ENCODE measurements at regions of chr19 and their contacts with region 1.

Region 1: DNA sequence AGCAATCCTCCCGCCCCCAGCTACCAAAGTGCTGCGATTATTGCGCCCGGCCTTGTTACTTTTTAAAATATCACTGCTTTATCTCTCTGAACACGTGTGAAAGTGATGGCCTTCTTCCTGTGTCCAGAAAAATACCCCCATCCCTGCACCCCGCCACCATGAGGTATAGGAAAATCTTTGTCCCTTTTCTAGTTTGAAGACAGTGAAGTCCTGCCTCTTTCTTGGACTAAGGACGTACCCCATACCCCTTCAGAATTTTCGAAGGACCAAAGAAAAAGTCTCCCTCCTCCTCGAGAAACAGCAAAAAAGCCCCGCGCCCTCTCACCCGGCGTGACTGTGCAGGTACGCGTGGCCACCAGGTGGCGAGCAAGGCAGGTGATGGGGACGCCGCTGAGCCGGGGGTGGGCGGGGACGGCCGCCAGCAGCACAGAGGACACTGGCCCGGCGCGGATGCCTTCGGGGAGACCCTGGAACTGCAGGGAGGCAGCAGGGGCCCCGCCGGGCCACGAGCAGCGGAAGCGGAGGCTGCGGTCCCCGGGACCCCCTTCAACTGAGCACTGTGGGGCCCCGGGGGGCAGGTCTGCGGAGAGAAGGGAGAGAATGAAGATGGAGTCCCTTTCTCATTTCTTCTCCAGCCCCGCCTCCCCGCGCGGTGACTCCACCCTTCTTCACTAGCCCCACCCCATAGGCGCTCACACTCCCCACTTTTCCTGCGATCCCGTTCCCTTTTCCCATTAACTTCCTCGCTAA is 3.2 kb downstream of the VSIG10L start:
- DNase-seq: peak; percentile 56
- ATAC-seq: peak; percentile 76
- H3K4me3 ChIP-seq: peak overlapping the region; percentile 54 to 67
- H3K27ac ChIP-seq: peak overlapping the region; percentile 55
- H3K4me1 ChIP-seq: peaks cover 5 to 45% of the 10 kb centered on the region in 2 experiments; a peak in 3 of 4 replicates
- H3K27me3 ChIP-seq: no peaks in the 10 kb centered on the region
- CTCF ChIP-seq: peak; percentile 86 to 92 (median 89)
- POLR2A ChIP-seq: no peak
- RAD21 ChIP-seq: peak; percentile 86

Region 2: DNA sequence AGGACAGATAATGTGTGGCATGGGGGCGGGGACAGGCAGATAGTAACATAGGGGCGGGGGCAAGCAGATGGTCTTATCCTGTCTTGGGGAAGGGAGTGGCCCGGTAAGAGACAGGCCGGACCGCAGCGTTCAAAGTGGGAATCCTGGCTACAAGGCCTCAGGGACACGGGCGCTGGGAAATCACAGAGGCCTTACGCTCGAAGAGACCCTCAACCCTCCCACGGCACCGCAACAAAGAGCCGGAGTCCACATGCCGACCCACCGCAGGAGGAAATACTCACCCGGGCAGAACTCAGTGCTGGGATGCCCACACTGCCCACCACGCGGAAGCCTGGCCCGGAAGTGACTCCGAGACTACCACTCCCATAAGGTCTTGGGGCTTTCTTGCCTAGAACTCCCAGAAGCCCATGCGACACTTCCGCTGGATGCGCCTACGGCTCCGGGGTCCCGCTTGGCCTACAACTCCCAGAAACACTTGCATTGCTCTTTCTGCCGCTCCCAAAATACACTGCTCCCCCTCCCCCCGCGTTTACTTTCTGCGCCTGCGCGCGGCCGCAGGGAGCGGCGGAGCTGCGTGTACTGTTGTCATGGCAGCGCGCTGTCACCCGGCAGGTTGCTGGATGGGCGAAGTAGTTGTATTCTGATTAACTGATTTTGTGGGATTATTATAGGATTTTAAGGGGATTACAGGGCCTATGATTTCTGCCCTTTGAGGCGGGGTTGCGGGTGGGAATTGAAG is 230.5 kb before region 1 on chr19 and contains the start of gene CTU1:
- CTCF ChIA-PET with region 1: no interaction called
- POLR2A ChIA-PET with region 1: no interaction called
- RAD21 ChIA-PET with region 1: no interaction called
- intact Hi-C with region 1: no loop called
- DNase-seq: peak; percentile 99
- ATAC-seq: peak; percentile 93
- H3K4me3 ChIP-seq: peak within 1 kb of the TSS; percentile 93 to 95
- H3K27ac ChIP-seq: peak within 1 kb of the TSS; percentile 44
- H3K4me1 ChIP-seq: peaks cover 19 to 37% of the 10 kb centered on the region in 2 experiments
- H3K27me3 ChIP-seq: no peaks in the 10 kb centered on the region; the same call in 1 of the 2 replicates
- CTCF ChIP-seq: no peak
- POLR2A ChIP-seq: peak; percentile 60
- RAD21 ChIP-seq: no peak
- total RNA-seq, gene CTU1: 14.0 TPM

Region 3: GRCh38 chr19:51305479-51305878 is 33.3 kb before region 1 on chr19:
- CTCF ChIA-PET with region 1: no interaction called
- POLR2A ChIA-PET with region 1: no interaction called
- RAD21 ChIA-PET with region 1: no interaction called
- intact Hi-C with region 1: no loop called
- DNase-seq: no peak
- ATAC-seq: no peak
- H3K4me3 ChIP-seq: no peak overlapping the region
- H3K27ac ChIP-seq: no peak overlapping the region
- H3K4me1 ChIP-seq: no peaks in the 10 kb centered on the region
- H3K27me3 ChIP-seq: 0 out of 2 replicates have a peak, but pooled peaks cover 6% of the 10 kb centered on the region
- CTCF ChIP-seq: no peak
- POLR2A ChIP-seq: no peak
- RAD21 ChIP-seq: no peak

Region 4: GRCh38 chr19:51325161-51325976 is 13.4 kb before region 1 on chr19:
- CTCF ChIA-PET with region 1: interaction called, 10 read pairs
- POLR2A ChIA-PET with region 1: no interaction called
- RAD21 ChIA-PET with region 1: no interaction called
- intact Hi-C with region 1: no loop called
- DNase-seq: no peak
- ATAC-seq: no peak
- H3K4me3 ChIP-seq: no peak overlapping the region
- H3K27ac ChIP-seq: no peak overlapping the region
- H3K4me1 ChIP-seq: peaks cover 2 to 10% of the 10 kb centered on the region in 2 experiments; a peak in 2 of 4 replicates
- H3K27me3 ChIP-seq: peaks cover 8% of the 10 kb centered on the region; the same call in 1 of the 2 replicates
- CTCF ChIP-seq: no peak
- POLR2A ChIP-seq: no peak
- RAD21 ChIP-seq: no peak

Region 5: DNA sequence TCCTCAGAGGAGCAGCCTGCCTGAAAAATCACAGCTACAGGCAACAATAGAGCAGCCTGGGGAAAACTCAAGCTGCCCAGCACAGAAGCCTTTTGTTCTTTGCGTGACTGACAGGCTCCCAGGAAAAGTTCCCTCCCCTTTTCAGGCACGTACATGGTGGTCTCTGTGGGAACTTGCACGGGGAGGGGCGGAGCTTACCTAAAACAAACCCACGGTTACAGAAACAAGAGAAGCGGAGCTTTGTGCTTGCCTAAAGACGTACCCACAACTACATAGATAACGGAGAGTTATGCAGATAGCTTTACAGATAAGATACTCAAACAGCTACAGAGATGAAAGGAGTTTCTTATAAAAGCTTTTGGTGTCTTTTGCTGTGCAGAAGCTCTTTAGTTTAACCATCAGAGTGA is 16.0 kb after region 1 on chr19:
- CTCF ChIA-PET with region 1: interaction called, 11 read pairs
- POLR2A ChIA-PET with region 1: interaction called, 5 read pairs
- RAD21 ChIA-PET with region 1: no interaction called
- intact Hi-C with region 1: no loop called
- DNase-seq: no peak
- ATAC-seq: no peak
- H3K4me3 ChIP-seq: no peak overlapping the region
- H3K27ac ChIP-seq: no peak overlapping the region
- H3K4me1 ChIP-seq: peaks cover 15 to 32% of the 10 kb centered on the region in 2 experiments
- H3K27me3 ChIP-seq: no peaks in the 10 kb centered on the region
- CTCF ChIP-seq: no peak
- POLR2A ChIP-seq: no peak
- RAD21 ChIP-seq: no peak

Region 6: GRCh38 chr19:51367565-51368365 is 29.0 kb after region 1 on chr19:
- CTCF ChIA-PET with region 1: interaction called, 12 read pairs
- POLR2A ChIA-PET with region 1: interaction called, 12 read pairs
- RAD21 ChIA-PET with region 1: interaction called in 1 of 2 experiments, 4 read pairs
- intact Hi-C with region 1: loop called (anchors 1 kb)
- DNase-seq: peak; percentile 97
- ATAC-seq: peak; percentile 85
- H3K4me3 ChIP-seq: peak overlapping the region; percentile 78 to 94
- H3K27ac ChIP-seq: peak overlapping the region; percentile 84
- H3K4me1 ChIP-seq: peaks cover 28 to 43% of the 10 kb centered on the region in 2 experiments
- H3K27me3 ChIP-seq: no peaks in the 10 kb centered on the region
- CTCF ChIP-seq: no peak
- POLR2A ChIP-seq: peak; percentile 17
- RAD21 ChIP-seq: no peak

Region 7: DNA sequence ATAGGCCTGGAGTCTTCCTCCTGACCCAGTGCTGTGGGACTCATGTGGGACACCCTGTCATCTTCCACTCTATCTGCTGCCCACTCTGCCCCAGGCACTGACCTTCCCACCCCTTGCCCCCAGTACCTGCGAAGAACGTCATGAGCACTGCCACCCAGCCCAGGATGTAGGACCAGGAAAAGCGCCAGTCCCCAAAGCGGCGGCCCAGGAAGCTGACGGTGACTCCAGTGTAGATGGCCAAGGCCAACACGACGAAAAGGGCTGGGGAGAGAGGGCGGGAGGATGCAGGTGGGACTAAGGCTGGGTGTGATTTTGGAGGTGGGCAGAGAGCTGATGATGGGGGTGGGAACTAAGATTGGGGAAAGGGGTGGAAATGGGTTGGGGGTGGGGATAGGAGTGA is 41.6 kb after region 1 on chr19:
- CTCF ChIA-PET with region 1: no interaction called
- POLR2A ChIA-PET with region 1: no interaction called
- RAD21 ChIA-PET with region 1: no interaction called
- intact Hi-C with region 1: no loop called
- DNase-seq: no peak
- ATAC-seq: no peak
- H3K4me3 ChIP-seq: no peak overlapping the region
- H3K27ac ChIP-seq: no peak overlapping the region
- H3K4me1 ChIP-seq: peaks cover 0 to 12% of the 10 kb centered on the region in 2 experiments; a peak in 2 of 4 replicates
- H3K27me3 ChIP-seq: no peaks in the 10 kb centered on the region
- CTCF ChIP-seq: no peak
- POLR2A ChIP-seq: no peak
- RAD21 ChIP-seq: no peak

Region 8: DNA sequence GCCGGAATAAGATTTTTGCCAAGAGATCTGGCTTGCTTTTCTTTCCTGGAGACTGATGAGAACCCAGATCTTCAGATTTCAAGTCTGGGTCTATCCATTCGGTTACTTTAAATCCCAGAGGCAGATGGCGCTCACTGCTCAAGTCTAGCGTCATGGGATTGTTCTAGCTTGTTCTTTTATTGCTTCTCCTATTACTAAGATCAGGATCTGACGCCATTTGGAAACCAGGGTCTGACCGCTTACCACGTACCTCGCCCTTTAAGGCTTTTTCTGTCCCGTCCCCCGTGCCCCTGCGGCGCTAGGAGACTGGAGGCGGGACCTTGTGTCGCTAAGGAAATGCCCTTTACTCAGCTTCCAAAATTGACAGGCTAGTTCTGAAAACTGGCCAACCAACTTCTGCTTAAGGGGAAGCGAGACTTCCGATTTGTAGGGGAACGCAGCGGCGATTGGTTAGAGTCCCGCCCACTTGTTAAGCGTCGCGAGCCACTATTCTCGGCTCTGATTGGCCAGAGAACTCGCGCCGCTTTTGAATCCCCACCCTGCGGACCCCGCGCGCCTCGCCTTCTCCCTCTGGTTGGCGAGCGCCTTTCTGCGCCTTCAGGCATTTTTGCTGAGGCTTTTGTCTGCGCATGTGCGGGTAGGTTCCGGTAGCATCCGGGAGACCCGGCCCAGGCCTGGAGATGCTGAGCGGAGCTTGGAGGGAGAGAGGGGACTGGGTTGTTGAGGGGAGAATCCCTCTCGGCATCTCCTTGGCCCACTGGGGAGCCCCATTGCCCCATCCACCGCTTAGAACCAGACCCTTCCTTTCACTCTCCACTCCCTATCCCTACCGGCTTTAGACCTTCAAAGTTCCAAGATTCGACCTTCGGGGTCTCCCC is 55.5 kb after region 1 on chr19:
- CTCF ChIA-PET with region 1: interaction called, 16 read pairs
- POLR2A ChIA-PET with region 1: interaction called, 10 read pairs
- RAD21 ChIA-PET with region 1: no interaction called
- intact Hi-C with region 1: loop called (anchors 1 kb)
- DNase-seq: peak; percentile 100
- ATAC-seq: peak; percentile 90
- H3K4me3 ChIP-seq: peak overlapping the region; percentile 65 to 95
- H3K27ac ChIP-seq: peak overlapping the region; percentile 81
- H3K4me1 ChIP-seq: peaks cover 6 to 25% of the 10 kb centered on the region in 2 experiments; a peak in 3 of 4 replicates
- H3K27me3 ChIP-seq: no peaks in the 10 kb centered on the region
- CTCF ChIP-seq: no peak
- POLR2A ChIP-seq: peak; percentile 59
- RAD21 ChIP-seq: no peak

Region 9: GRCh38 chr19:51407511-51408131 is 68.9 kb after region 1 on chr19:
- CTCF ChIA-PET with region 1: interaction called, 21 read pairs
- POLR2A ChIA-PET with region 1: interaction called, 3 read pairs
- RAD21 ChIA-PET with region 1: interaction called, 4 to 7 read pairs
- intact Hi-C with region 1: loop called (anchors 1 kb)
- DNase-seq: peak; percentile 46
- ATAC-seq: peak; percentile 90
- H3K4me3 ChIP-seq: no peak overlapping the region
- H3K27ac ChIP-seq: no peak overlapping the region
- H3K4me1 ChIP-seq: no peaks in the 10 kb centered on the region
- H3K27me3 ChIP-seq: no peaks in the 10 kb centered on the region
- CTCF ChIP-seq: peak; percentile 66 to 83 (median 73)
- POLR2A ChIP-seq: no peak
- RAD21 ChIP-seq: peak; percentile 81

Region 10: GRCh38 chr19:51441410-51442390 is 103.0 kb after region 1 on chr19:
- CTCF ChIA-PET with region 1: interaction called, 4 read pairs
- POLR2A ChIA-PET with region 1: no interaction called
- RAD21 ChIA-PET with region 1: interaction called in 1 of 2 experiments, 3 read pairs
- intact Hi-C with region 1: loop called (anchors 1 kb)
- DNase-seq: no peak
- ATAC-seq: peak; percentile 74
- H3K4me3 ChIP-seq: peak overlapping the region; percentile 1 to 41; a peak in 3 of 4 replicates
- H3K27ac ChIP-seq: no peak overlapping the region
- H3K4me1 ChIP-seq: peaks cover 13 to 18% of the 10 kb centered on the region in 2 experiments
- H3K27me3 ChIP-seq: peaks cover 15% of the 10 kb centered on the region
- CTCF ChIP-seq: no peak
- POLR2A ChIP-seq: no peak
- RAD21 ChIP-seq: no peak

Region 11: GRCh38 chr19:51668216-51668615 is 329.5 kb after region 1 on chr19:
- CTCF ChIA-PET with region 1: no interaction called
- POLR2A ChIA-PET with region 1: no interaction called
- RAD21 ChIA-PET with region 1: no interaction called
- intact Hi-C with region 1: no loop called
- DNase-seq: no peak
- ATAC-seq: no peak
- H3K4me3 ChIP-seq: no peak overlapping the region
- H3K27ac ChIP-seq: no peak overlapping the region
- H3K4me1 ChIP-seq: no peaks in the 10 kb centered on the region
- H3K27me3 ChIP-seq: peaks cover 12% of the 10 kb centered on the region; the same call in 1 of the 2 replicates
- CTCF ChIP-seq: no peak
- POLR2A ChIP-seq: no peak
- RAD21 ChIP-seq: no peak